Dorsolateral prefrontal cortex (tissue), 120 donors: ENCODE measurements at regions of chr17 and their contacts with region 1.

Region 1: GRCh38 chr17:50931144-50931908 is 65.2 kb upstream of the TOB1 start:
- DNase-seq: peak; percentile 83 to 94 (median 92)
- H3K4me3 ChIP-seq: peak overlapping the region; percentile 25 to 72 (median 53)
- H3K27ac ChIP-seq: peak overlapping the region; percentile 96 to 100 (median 99)
- H3K27me3 ChIP-seq: no peaks in the 10 kb centered on the region
- CTCF ChIP-seq: peak in 10 of 56 donors; percentile 8 to 30 (median 18)

Region 2: GRCh38 chr17:50707289-50708049 is 223.9 kb before region 1 on chr17 and contains the start of gene ANKRD40:
- intact Hi-C with region 1: loop called in 1 of 2 experiments (anchors 5 kb)
- DNase-seq: peak; percentile 78 to 92 (median 90)
- H3K4me3 ChIP-seq: peak within 1 kb of the TSS; percentile 59 to 94 (median 80)
- H3K27ac ChIP-seq: peak within 1 kb of the TSS; percentile 92 to 100 (median 99)
- H3K27me3 ChIP-seq: no peaks in the 10 kb centered on the region
- CTCF ChIP-seq: peak in 18 of 56 donors; percentile 4 to 43 (median 20)
- total RNA-seq, gene ANKRD40: 68.8 to 245 (median 115) TPM

Region 3: GRCh38 chr17:50893183-50893993 is 37.9 kb before region 1 on chr17:
- intact Hi-C with region 1: no loop called
- DNase-seq: peak in 8 of 10 donors; percentile 53 to 83 (median 66)
- H3K4me3 ChIP-seq: peak overlapping the region in 23 of 59 donors; percentile 1 to 35 (median 10)
- H3K27ac ChIP-seq: peak overlapping the region; percentile 31 to 97 (median 87)
- H3K27me3 ChIP-seq: no peaks in the 10 kb centered on the region
- CTCF ChIP-seq: peak in 1 of 56 donors; percentile 10

Region 4: DNA sequence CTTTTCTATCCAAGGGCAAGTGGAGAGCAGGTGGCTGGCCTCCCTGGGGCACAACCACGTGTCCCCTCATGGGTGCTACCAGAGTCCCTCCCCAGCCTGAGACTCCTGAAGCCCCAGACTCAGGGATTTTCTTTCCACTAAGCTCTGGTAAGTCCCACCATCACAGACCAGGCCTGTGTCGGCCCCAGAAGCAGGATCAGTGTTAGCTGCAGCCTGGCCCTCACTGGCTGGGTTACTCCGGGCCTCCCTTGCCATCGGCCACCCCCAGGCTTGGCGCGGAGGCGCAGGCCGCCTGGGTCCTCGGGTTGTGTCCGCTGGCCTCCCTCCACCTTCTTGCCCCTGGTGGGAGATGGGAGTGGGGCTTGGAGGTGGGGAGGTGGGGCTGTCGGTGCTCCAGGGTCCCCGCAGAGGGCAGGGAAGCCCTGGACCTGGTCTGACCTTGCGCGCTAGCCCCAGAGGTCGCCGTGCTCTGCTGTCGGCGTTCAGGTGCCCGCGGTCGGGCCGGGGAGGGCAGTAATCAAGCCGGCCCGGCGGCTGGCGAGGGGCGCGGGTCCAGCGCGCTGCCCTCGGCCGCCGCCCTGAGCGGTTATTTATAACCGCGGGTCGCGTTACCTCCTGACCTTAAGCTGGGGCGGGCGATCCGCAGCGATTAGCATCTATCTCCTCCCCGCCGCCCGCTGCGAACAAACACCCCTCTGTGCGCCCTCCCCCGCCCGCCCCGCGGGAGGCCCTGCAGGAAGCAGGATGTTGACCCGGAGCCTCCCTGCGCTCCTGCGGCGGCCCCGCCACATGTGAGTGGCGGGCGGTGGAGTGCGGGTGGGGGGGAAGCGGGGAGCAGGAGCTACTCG is 13.0 kb after region 1 on chr17:
- intact Hi-C with region 1: loop called in 1 of 2 experiments (anchors 1 kb)
- DNase-seq: peak in 9 of 10 donors; percentile 79 to 91 (median 88)
- H3K4me3 ChIP-seq: peak overlapping the region; percentile 37 to 81 (median 65)
- H3K27ac ChIP-seq: peak overlapping the region; percentile 85 to 99 (median 96)
- H3K27me3 ChIP-seq: no peaks in the 10 kb centered on the region
- CTCF ChIP-seq: peak in 19 of 56 donors; percentile 7 to 42 (median 18)